ENCODE measurements at regions of chr10 and their contacts with region 1.

Region 1: DNA sequence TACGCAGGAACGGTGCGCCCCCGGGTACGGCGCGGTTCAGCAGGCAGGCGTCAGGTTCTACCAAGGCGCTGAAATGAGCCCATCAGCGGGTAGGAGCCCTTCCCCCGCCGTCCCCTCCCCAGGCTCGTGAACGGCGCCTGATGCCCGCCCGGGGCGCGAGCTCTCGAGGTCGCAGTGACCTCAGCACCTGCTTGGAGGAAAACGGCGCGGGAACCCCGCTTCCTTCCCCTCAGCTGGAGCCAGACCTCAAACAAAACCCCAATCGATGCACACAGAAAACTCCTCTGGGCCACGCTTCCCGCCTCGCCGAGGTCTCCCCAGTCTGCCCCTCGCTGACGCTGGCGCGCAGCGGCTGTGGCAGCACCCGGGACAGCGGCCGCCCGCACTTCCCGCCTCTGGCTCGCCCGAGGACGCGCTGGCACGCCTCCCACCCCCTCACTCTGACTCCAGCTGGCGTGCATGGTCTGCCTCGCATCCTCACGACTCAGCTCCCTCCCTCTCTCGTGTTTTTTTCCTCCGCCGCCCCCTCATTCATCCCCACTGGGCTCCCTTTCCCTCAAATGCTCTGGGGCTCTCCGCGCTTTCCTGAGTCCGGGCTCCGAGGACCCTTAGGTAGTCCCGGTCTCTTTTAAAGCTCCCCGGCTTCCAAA is 514 bp upstream of the GAD2 start:
- DNase-seq: peak in 2 of 14 experiments; percentile 2
- ATAC-seq: no peak
- H3K4me3 ChIP-seq: no peak overlapping the region
- H3K4me3 Mint-ChIP-seq: peak overlapping the region; percentile 43
- H3K27ac ChIP-seq: no peak overlapping the region
- H3K27ac Mint-ChIP-seq: no peak overlapping the region
- H3K4me1 ChIP-seq: peaks cover 29% of the 10 kb centered on the region
- H3K4me1 Mint-ChIP-seq: peaks cover 25% of the 10 kb centered on the region
- H3K27me3 ChIP-seq: peaks cover 65 to 97% of the 10 kb centered on the region in 2 experiments
- H3K27me3 Mint-ChIP-seq: peaks cover 90% of the 10 kb centered on the region
- CTCF ChIP-seq: no peak

Region 2: DNA sequence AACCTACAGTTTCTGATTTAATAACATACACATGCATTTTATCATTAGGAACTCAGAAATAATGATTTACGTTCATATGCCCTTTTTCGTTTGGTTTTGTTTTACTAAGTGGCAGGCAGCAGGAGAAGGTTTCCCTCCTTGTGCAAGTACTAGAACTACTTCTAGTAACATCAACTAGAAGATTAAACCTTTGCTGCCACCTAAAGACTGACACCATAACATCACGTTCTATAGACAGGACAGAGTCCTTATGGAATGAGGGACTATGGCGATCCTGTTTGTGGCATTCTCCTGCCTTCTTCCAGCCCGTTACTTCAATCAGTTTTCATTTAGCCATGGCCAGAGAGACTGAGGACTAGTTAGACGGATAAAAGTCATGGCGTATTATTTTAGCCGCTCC is 53.7 kb after region 1 on chr10:
- CTCF ChIA-PET with region 1: no interaction called
- POLR2A ChIA-PET with region 1: no interaction called
- intact Hi-C with region 1: loop called in 1 of 2 experiments (anchors 10 kb)
- DNase-seq: no peak
- ATAC-seq: no peak
- H3K4me3 ChIP-seq: no peak overlapping the region
- H3K4me3 Mint-ChIP-seq: no peak overlapping the region
- H3K27ac ChIP-seq: no peak overlapping the region
- H3K27ac Mint-ChIP-seq: no peak overlapping the region
- H3K4me1 ChIP-seq: no peaks in the 10 kb centered on the region
- H3K4me1 Mint-ChIP-seq: no peaks in the 10 kb centered on the region
- H3K27me3 ChIP-seq: peaks cover 3 to 6% of the 10 kb centered on the region in 2 experiments
- H3K27me3 Mint-ChIP-seq: peaks cover 43% of the 10 kb centered on the region
- CTCF ChIP-seq: no peak

Region 3: DNA sequence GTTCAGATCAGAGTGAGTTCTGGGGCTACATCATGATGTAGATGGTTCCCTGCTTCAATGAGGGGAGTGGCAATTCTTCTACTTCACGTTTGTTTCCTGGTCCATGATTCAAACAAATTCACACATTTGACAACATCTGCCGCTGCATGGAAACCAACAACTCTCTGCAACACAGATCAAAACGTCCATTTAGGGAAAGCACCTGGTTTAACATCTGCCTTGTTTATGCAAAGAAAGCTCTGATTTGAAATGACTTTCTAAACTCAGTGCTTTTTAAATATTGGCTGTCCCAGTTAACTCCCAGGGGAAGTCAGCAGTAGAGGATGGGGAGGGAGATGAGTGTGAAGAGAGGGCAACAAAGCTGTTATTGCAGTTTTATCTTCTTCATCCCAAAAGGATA is 94.3 kb after region 1 on chr10:
- CTCF ChIA-PET with region 1: no interaction called
- POLR2A ChIA-PET with region 1: no interaction called
- intact Hi-C with region 1: no loop called
- DNase-seq: no peak
- ATAC-seq: no peak
- H3K4me3 ChIP-seq: no peak overlapping the region
- H3K4me3 Mint-ChIP-seq: no peak overlapping the region
- H3K27ac ChIP-seq: no peak overlapping the region
- H3K27ac Mint-ChIP-seq: no peak overlapping the region
- H3K4me1 ChIP-seq: no peaks in the 10 kb centered on the region
- H3K4me1 Mint-ChIP-seq: no peaks in the 10 kb centered on the region
- H3K27me3 ChIP-seq: peaks cover 5 to 14% of the 10 kb centered on the region in 2 experiments
- H3K27me3 Mint-ChIP-seq: peaks cover 48% of the 10 kb centered on the region
- CTCF ChIP-seq: no peak

Region 4: GRCh38 chr10:26481914-26482550 is 266.0 kb after region 1 on chr10:
- CTCF ChIA-PET with region 1: no interaction called
- POLR2A ChIA-PET with region 1: no interaction called
- intact Hi-C with region 1: no loop called
- DNase-seq: peak in 11 of 14 experiments; percentile 21 to 89 (median 47)
- ATAC-seq: peak; percentile 73
- H3K4me3 ChIP-seq: peak overlapping the region; percentile 27
- H3K4me3 Mint-ChIP-seq: peak overlapping the region; percentile 47
- H3K27ac ChIP-seq: peak overlapping the region; percentile 66 to 71
- H3K27ac Mint-ChIP-seq: peak overlapping the region; percentile 88
- H3K4me1 ChIP-seq: peaks cover 78% of the 10 kb centered on the region
- H3K4me1 Mint-ChIP-seq: peaks cover 79% of the 10 kb centered on the region
- H3K27me3 ChIP-seq: no peaks in the 10 kb centered on the region
- H3K27me3 Mint-ChIP-seq: no peaks in the 10 kb centered on the region
- CTCF ChIP-seq: no peak